Activated T-helper 1 cell treated with anti-CD3 and anti-CD28 coated beads, Interleukin-12 subunit alpha, Interleukin-12 subunit beta, Interleukin-2, Interleukin-4 antibody, amounts not matched to agents 30 ng/mL and 10 ng/mL and 1 ng/mL, durations not matched to agents 14 hours and 24 hours and 36 hours (primary cell): ENCODE measurements at regions of chr16 and their contacts with region 1.

Region 1: DNA sequence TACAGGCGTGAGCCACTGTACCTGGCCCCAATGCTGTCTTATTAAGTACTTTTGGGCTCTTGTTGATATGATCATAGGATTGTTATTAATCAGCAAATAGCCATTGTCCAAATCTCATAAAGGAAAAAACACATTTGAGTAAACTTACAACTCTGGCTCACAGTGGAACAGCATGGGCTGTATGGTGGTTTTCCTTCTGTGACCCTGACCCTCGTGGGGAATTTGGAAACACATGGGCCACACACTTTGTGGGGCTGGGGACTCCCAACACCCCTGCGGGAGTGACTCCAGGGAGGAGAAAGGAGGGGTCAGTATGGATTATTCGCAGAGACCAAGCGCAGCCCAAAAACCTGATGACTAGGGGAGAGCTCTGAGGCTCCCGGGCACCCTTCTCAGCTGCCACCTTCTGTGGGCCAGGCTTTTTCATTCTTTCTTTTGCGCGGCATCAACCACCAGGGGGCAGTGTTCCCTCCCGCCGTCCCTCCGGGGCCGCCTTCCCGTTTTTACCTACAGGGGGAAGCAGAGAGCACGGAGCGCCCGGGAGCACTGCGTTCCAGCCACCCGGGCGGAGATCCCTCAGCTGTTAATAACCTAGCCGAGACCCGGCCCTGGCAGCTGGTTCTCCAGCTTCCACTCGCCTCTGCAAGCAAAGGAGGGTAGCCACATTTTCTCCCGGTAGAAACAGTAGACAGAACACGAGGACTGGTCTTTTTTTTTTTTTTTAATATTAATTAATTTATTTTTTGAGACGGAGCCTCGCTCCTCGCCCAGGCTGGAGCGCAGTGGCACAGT is 9.7 kb downstream of the TSNAXIP1 start:
- DNase-seq: peak; percentile 88
- H3K4me3 Mint-ChIP-seq: no peak overlapping the region
- H3K27ac Mint-ChIP-seq: no peak overlapping the region
- H3K4me1 Mint-ChIP-seq: peaks cover 8% of the 10 kb centered on the region
- H3K27me3 Mint-ChIP-seq: peaks cover 10% of the 10 kb centered on the region

Region 2: DNA sequence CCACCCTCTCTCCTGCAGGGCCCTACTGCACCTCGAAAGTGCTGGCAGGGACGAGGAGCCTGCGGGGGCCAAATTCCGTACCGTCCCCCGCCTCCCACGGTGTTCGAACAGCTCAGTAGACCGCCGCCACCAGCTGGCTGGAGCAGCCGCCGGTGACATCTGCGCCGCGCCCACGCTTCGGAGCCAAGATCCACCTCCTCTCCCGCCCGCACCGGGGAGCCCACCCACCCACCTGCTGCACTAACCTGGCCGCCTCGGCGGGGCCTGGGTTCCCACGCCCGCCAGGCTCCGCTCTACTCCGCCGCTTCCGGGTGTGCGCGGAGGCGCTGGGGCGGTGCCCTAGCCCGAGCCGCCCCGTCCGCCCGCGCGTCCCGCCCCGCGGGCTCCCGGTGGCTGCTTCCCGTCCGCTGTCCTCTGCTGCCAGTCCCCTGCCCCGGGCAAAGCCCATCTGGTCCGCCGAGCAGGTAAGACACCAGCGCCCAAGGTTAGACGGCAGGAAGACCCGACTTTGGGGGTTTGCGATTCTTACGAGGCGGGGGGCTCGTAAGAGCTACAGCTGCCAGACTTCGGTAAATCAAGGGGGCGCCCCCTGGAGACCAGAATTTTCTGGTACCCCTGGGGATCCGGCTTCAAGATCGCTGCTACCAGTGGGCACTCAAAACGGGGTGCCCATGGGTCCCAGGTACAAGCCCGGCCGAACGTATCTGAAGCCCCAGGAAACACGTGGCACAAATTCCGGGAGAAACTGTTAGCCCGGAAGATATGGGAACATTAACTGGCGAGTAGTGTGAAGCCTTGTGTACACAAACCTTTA is 656.6 kb before region 1 on chr16 and contains the starts of genes FBXL8 and TRADD:
- intact Hi-C with region 1: no loop called
- DNase-seq: peak; percentile 84
- H3K4me3 Mint-ChIP-seq: peak within 1 kb of the TSS; percentile 91
- H3K27ac Mint-ChIP-seq: peak within 1 kb of the TSS; percentile 92
- H3K4me1 Mint-ChIP-seq: peaks cover 45% of the 10 kb centered on the region
- H3K27me3 Mint-ChIP-seq: peaks cover 2% of the 10 kb centered on the region
- total RNA-seq, gene FBXL8: 19.3 and 22.4 TPM in 2 replicates
- total RNA-seq, gene TRADD: 29.0 TPM in 2 replicates

Region 3: GRCh38 chr16:67672739-67673662 is 143.4 kb before region 1 on chr16:
- intact Hi-C with region 1: loop called (anchors 1 kb)
- DNase-seq: no peak
- H3K4me3 Mint-ChIP-seq: no peak overlapping the region
- H3K27ac Mint-ChIP-seq: no peak overlapping the region
- H3K4me1 Mint-ChIP-seq: no peaks in the 10 kb centered on the region
- H3K27me3 Mint-ChIP-seq: no peaks in the 10 kb centered on the region

Region 4: DNA sequence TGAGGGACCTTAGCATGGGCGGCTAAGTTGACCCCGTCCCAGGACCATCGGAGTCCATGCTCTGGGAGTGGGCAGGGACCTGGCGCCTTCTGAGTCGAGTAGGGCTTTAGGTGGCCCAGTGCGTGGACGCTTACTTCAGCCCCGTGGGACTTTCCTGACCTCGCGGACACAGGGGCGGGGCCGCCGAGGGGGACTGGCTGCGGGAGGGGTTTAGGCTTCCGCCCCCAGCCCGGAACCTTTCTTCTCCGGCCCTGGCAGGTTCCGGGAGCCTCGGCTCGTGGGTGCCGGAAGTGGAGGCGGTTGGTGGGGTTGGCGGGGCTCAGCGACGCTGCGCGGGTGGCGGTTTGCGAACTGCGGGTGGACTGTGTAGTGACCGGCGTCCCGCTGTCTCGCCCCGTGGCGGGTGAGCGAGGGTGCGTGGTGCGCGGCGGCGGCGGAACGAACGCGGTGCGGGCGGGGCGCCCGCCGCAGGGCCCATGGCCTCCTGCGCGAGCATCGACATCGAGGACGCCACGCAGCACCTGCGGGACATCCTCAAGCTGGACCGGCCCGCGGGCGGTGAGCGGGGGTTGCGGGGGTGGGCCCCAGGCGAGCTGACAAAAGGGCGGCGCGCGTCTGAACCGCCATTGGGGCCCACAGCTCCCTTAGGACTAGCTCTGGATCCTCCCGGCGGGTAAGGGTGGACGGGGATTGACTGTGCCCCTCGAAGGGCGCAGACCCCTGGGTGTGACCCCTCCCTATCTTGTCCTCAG is 56.5 kb after region 1 on chr16 and contains the start of gene EDC4:
- intact Hi-C with region 1: loop called (anchors 2 kb)
- DNase-seq: peak; percentile 89
- H3K4me3 Mint-ChIP-seq: peak within 1 kb of the TSS; percentile 88
- H3K27ac Mint-ChIP-seq: peak within 1 kb of the TSS; percentile 81
- H3K4me1 Mint-ChIP-seq: peaks cover 35% of the 10 kb centered on the region
- H3K27me3 Mint-ChIP-seq: no peaks in the 10 kb centered on the region
- total RNA-seq, gene EDC4: 115 and 128 TPM in 2 replicates

Region 5: DNA sequence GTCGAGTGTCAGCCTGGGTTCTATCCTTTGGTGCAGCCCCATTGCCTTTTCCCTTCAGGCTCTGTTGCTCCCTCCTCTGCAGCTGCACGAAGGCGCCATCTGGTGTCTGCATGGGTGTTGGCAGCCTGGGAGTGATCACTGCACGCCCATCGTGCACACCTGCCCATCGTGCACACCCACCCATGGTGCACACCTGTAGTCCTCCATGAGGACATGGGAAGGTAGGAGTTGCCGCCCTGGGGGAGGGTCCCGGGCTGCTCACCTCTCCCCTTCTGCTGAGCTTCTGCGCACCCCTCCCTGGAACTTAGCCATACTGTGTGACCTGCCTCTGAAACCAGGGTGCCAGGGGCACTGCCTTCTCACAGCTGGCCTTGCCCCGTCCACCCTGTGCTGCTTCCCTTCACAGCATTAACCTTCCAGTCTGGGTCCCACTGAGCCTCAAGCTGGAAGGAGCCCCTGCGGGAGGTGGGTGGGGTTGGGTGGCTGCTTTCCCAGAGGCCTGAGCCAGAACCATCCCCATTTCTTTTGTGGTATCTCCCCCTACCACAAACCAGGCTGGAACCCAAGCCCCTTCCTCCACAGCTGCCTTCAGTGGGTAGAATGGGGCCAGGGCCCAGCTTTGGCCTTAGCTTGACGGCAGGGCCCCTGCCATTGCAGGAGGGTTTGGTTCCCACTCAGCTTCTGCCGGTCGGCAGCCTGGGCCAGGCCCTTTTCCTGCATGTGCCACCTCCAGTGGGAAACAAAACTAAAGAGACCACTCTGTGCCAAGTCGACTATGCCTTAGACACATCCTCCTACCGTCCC is 112.3 kb after region 1 on chr16:
- intact Hi-C with region 1: loop called (anchors 1 kb)
- DNase-seq: peak; percentile 67
- H3K4me3 Mint-ChIP-seq: no peak overlapping the region
- H3K27ac Mint-ChIP-seq: no peak overlapping the region
- H3K4me1 Mint-ChIP-seq: peaks cover 1% of the 10 kb centered on the region
- H3K27me3 Mint-ChIP-seq: no peaks in the 10 kb centered on the region

Region 6: DNA sequence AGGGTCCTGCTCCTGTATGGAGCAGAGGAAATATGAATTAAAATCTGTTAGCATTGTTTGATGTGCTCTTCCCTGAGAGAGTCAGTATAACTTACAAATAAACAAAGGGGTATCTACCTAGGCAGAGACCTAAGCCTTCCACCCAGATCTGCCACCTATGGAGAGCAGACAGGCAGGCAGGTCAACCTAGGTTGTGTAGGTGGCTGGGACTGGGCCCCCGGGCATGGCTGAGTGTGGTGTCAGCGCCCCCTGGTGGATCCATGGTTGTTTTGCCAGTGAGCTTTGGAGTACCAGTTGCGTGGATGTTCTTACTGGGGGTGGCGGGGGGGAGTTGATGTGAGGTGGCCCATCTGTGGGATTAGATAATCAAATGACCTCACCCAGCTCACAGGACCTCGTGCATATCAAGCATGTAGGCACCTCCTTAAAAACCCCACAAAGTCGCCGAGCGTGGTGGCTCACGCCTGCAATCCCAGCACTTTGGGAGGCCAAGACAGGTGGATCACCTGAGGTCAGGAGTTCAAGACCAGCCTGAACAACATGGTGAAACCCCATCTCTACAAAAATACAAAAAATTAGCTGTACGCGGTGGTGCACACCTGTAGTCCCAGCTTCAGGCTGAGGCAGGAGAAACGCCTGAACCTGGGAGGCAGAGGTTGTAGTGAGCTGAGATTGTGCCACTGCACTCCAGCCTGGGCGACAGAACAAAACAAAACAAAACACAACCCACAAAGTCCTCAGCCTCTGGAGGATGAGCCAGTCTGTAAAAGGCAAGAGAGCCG is 224.3 kb after region 1 on chr16:
- intact Hi-C with region 1: loop called (anchors 1 kb)
- DNase-seq: peak; percentile 81
- H3K4me3 Mint-ChIP-seq: no peak overlapping the region
- H3K27ac Mint-ChIP-seq: peak overlapping the region; percentile 70
- H3K4me1 Mint-ChIP-seq: peaks cover 19% of the 10 kb centered on the region
- H3K27me3 Mint-ChIP-seq: no peaks in the 10 kb centered on the region